PC-3 (cell line): ENCODE measurements at regions of chr4 and their contacts with region 1.

Region 1: GRCh38 chr4:58247792-58248191 is 1137.6 kb upstream of the IGFBP7 start:
- DNase-seq: peak; percentile 53
- ATAC-seq: peak; percentile 91
- H3K4me3 ChIP-seq: no peak overlapping the region
- H3K27ac ChIP-seq: no peak overlapping the region
- H3K4me1 ChIP-seq: no peaks in the 10 kb centered on the region
- H3K27me3 ChIP-seq: no peaks in the 10 kb centered on the region
- CTCF ChIP-seq: peak; percentile 55

Region 2: GRCh38 chr4:58081356-58081755 is 166.4 kb before region 1 on chr4:
- CTCF ChIA-PET with region 1: no interaction called
- POLR2A ChIA-PET with region 1: no interaction called
- intact Hi-C with region 1: no loop called
- DNase-seq: no peak
- ATAC-seq: no peak
- H3K4me3 ChIP-seq: no peak overlapping the region
- H3K27ac ChIP-seq: no peak overlapping the region
- H3K4me1 ChIP-seq: no peaks in the 10 kb centered on the region
- H3K27me3 ChIP-seq: no peaks in the 10 kb centered on the region
- CTCF ChIP-seq: no peak

Region 3: DNA sequence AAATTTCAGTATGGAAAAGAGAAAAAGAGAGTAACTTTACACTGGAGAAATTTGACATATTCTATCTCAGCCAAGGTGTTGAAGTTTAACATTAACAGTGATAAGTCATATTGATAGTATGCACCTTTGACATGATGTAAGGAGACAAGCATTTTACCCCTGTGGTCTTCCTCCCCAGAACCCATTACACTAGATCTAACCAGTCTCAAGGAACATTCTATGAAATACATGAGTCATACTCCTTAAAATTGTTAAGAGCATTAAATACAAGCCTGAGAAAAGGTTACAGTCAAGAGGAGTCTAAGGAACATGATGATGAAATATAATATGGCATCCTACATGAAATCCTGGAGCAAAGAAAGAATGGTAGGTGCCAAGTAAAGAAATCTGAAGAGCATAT is 13.7 kb after region 1 on chr4:
- CTCF ChIA-PET with region 1: no interaction called
- POLR2A ChIA-PET with region 1: no interaction called
- intact Hi-C with region 1: no loop called
- DNase-seq: no peak
- ATAC-seq: no peak
- H3K4me3 ChIP-seq: no peak overlapping the region
- H3K27ac ChIP-seq: no peak overlapping the region
- H3K4me1 ChIP-seq: no peaks in the 10 kb centered on the region
- H3K27me3 ChIP-seq: no peaks in the 10 kb centered on the region
- CTCF ChIP-seq: no peak

Region 4: DNA sequence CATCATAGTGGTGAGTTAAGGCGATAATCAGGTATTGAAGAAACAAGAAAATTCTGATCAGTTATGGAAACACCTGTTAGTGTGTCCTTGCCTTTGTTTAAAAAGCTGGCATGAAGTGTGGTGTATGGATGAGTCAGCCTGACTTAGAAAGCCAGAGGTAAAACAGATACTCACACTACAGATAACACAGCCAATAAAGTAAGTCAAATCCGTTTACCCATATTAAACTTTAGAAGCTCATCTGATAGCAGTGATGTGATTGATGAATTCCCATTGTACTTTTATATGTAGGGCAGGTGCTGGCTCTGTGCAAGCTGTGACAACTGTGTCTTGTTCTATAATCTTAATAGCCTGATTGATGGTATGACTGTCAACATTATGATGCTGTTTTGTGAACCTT is 255.0 kb after region 1 on chr4:
- CTCF ChIA-PET with region 1: no interaction called
- POLR2A ChIA-PET with region 1: no interaction called
- intact Hi-C with region 1: loop called (anchors 10 kb)
- DNase-seq: peak; percentile 42
- ATAC-seq: peak; percentile 96
- H3K4me3 ChIP-seq: no peak overlapping the region
- H3K27ac ChIP-seq: no peak overlapping the region
- H3K4me1 ChIP-seq: no peaks in the 10 kb centered on the region
- H3K27me3 ChIP-seq: no peaks in the 10 kb centered on the region
- CTCF ChIP-seq: no peak

Region 5: DNA sequence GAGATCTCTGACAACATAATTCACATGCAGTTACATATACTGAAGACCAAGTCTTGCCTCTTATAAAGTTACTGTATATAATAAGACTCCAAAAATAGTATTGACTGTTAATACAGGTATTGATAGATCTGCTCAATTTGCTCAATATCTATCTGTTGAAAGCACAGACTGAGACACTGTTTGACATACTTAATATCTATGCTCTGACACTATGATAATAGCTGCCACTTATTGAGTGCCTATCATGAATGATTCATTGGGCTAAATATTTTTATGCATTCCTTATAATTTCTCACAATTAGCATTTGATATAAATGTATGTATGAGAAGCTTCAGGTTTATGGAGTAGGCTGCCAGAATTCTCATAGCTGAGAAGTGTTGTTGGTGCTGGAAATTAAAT is 463.2 kb after region 1 on chr4:
- CTCF ChIA-PET with region 1: no interaction called
- POLR2A ChIA-PET with region 1: no interaction called
- intact Hi-C with region 1: loop called (anchors 10 kb)
- DNase-seq: no peak
- ATAC-seq: no peak
- H3K4me3 ChIP-seq: no peak overlapping the region
- H3K27ac ChIP-seq: no peak overlapping the region
- H3K4me1 ChIP-seq: no peaks in the 10 kb centered on the region
- H3K27me3 ChIP-seq: no peaks in the 10 kb centered on the region
- CTCF ChIP-seq: no peak